Dorsolateral prefrontal cortex (tissue), 120 donors: ENCODE measurements at regions of chr4 and their contacts with region 1.

Region 1: GRCh38 chr4:143335979-143336780 is 496 bp upstream of the GAB1 start:
- DNase-seq: peak; percentile 69 to 90 (median 85)
- H3K4me3 ChIP-seq: peak overlapping the region; percentile 63 to 98 (median 91)
- H3K27ac ChIP-seq: peak overlapping the region in 45 of 59 donors; percentile 92 to 99 (median 98)
- H3K27me3 ChIP-seq: no peaks in the 10 kb centered on the region
- CTCF ChIP-seq: peak in 6 of 56 donors; percentile 5 to 30 (median 7)

Region 2: DNA sequence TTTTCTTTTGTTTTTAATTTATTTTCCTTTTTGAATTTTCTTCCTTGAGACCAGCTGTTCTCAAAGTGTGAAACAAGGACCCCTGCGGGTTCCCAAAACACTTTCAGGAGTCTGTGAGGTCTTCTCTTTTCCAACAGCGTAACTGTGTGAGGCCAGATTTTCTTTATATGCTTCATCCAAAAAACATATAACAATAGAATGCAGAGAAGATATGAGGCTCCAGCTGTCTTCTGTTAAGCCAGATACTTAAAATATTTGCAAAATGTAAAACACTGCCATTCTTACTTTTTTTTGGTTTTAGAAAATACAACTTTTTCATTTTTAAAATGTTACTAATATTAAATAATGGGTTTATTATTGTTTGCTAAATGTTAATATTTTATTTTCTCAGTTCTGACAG is 123.6 kb before region 1 on chr4:
- intact Hi-C with region 1: loop called in 1 of 2 experiments (anchors 5 kb)
- DNase-seq: no peak
- H3K4me3 ChIP-seq: no peak overlapping the region
- H3K27ac ChIP-seq: no peak overlapping the region
- H3K27me3 ChIP-seq: no peaks in the 10 kb centered on the region
- CTCF ChIP-seq: no peak

Region 3: DNA sequence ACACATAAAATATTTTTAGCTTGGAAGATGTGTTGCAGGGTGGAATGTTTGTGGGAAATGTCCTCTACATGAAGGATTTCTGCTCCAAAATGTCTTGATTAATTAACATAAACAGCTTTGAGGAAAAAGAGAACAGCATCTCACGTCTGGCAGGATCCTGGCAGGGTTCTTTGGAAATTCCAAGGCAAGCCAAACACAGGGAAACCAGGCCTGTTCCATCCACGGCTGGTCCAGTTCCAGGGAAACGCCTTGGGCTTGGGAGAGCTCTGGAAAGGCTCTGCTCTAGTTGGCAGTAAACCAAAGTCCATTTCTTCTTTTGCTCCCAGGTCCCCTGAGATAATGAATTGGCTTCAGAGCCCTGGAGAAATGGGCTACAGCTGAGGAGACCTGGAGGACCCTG is 41.9 kb before region 1 on chr4:
- intact Hi-C with region 1: no loop called
- DNase-seq: peak in 1 of 10 donors; percentile 64
- H3K4me3 ChIP-seq: no peak overlapping the region
- H3K27ac ChIP-seq: peak overlapping the region in 1 of 59 donors; percentile 10
- H3K27me3 ChIP-seq: no peaks in the 10 kb centered on the region
- CTCF ChIP-seq: no peak

Region 4: GRCh38 chr4:143402776-143403552 is 66.8 kb after region 1 on chr4:
- intact Hi-C with region 1: loop called in 1 of 2 experiments (anchors 5 kb)
- DNase-seq: no peak
- H3K4me3 ChIP-seq: peak overlapping the region in 38 of 59 donors; percentile 1 to 54 (median 15)
- H3K27ac ChIP-seq: peak overlapping the region; percentile 58 to 99 (median 97)
- H3K27me3 ChIP-seq: no peaks in the 10 kb centered on the region
- CTCF ChIP-seq: peak in 4 of 56 donors; percentile 4 to 10 (median 7)

Region 5: DNA sequence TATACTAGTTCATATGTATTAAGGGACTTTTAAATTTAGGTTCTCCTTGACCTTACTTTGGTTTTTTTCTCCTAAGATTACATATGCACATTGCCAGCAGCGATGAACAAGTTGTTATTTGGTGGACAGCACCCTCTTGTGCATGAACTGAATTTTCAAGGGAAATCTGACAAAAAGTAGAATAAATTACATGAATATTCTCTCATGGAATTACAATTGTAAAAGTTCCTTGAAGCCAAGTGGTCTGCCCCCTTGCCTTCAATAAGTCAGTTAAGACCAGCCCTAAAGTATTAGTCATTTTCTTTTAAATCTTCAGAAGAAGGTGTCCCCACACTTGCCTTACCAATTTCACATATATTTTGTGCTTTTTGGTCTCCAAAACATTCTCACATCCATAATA is 146.7 kb after region 1 on chr4:
- intact Hi-C with region 1: loop called (anchors 2 to 10 kb)
- DNase-seq: peak in 2 of 10 donors; percentile 9 to 26
- H3K4me3 ChIP-seq: no peak overlapping the region
- H3K27ac ChIP-seq: peak overlapping the region in 47 of 59 donors; percentile 0 to 85 (median 64)
- H3K27me3 ChIP-seq: no peaks in the 10 kb centered on the region
- CTCF ChIP-seq: peak; percentile 61 to 94 (median 81)